ENCODE measurements at regions of chr9 and their contacts with region 1.

Region 1: DNA sequence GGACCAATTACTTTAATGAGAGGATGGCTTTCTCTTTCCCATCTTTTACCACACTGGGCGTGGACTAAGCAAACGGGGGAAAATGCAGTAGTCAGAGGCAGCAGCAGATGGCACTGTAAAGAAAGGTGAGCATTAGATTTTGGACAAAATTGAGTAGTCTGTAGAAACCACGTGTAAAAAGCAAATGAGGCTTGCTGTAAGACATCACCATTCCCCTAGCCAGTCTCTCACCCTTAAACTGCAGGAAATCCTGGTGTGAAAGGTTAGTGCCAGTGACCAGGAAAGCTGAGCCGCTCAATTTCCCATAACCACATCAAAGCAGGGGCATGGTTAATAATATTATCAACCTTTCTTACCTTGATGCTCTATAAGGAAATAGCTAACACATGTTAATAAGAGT is 31.8 kb downstream of the SPATA31C2 start:
- DNase-seq: peak in 2 of 6 donors; percentile 29 to 37
- ATAC-seq: peak; percentile 82 to 96 (median 90)
- H3K4me3 ChIP-seq: no peak overlapping the region
- H3K27ac ChIP-seq: no peak overlapping the region
- H3K4me1 ChIP-seq: no peaks in the 10 kb centered on the region
- H3K27me3 ChIP-seq: no peaks in the 10 kb centered on the region
- CTCF ChIP-seq: peak in 3 of 4 donors; percentile 27 to 45 (median 42)

Region 2: GRCh38 chr9:87944682-87945081 is 161.8 kb before region 1 on chr9:
- intact Hi-C with region 1: loop called in 1 of 3 experiments (anchors 5 kb)
- DNase-seq: no peak
- ATAC-seq: no peak
- H3K4me3 ChIP-seq: no peak overlapping the region
- H3K27ac ChIP-seq: no peak overlapping the region
- H3K4me1 ChIP-seq: no peaks in the 10 kb centered on the region
- H3K27me3 ChIP-seq: no peaks in the 10 kb centered on the region
- CTCF ChIP-seq: no peak

Region 3: DNA sequence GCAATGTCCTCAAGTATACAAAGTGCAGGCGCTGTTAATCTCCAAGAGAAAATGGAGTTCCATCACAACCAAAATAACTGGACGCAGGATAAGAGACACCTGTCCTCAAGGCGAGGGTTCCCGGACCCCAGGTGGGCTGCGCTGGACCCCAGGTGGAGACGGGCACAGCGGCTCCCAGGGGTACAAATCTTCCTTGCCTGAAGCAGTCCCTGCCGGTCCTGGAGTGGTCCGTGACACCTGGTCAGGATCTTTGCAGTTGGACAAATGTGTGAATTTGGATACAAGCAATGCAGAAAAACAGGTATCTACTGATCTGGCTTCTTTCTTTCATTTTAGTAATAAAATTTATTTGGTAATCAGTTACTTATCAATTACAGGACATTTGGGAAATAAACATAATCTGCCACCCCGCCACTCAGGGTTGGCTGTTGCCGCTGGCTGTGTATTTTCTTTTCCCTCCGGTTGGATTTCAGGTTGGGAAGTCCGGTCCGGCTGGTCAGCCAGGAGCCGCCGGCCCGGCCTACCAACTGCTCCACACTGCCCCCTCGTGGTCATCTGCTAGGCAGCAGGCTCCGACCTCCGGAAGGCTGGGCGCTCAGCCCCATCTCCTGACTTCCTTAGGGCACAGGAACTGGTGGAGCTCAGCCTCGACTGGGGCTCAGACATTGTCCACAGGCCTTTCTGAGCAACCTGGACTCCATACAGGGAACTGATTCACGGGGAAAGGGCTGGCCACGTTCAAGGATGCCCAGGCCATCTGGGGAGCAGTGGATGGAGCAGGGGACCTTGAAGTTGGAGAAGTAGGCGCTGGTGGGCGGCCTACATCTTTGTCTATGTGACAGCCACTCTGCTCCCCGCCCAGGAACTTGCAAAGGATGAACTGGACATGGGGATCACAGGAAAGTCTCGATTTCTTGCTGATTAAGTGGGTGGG is 471.9 kb after region 1 on chr9:
- intact Hi-C with region 1: loop called in 2 of 3 experiments (anchors 10 kb)
- DNase-seq: peak; percentile 67 to 97 (median 88)
- ATAC-seq: peak; percentile 97 to 100 (median 98)
- H3K4me3 ChIP-seq: peak overlapping the region in 1 of 4 donors; percentile 19
- H3K27ac ChIP-seq: no peak overlapping the region
- H3K4me1 ChIP-seq: peaks cover 0 to 4% (median 0%) of the 10 kb centered on the region in 3 donors
- H3K27me3 ChIP-seq: no peaks in the 10 kb centered on the region
- CTCF ChIP-seq: peak; percentile 94 to 98 (median 98)

Measured in pancreas (tissue), 10 donors.